Motor neuron (in vitro differentiated cells): ENCODE measurements at regions of chr22 and their contacts with region 1.

Region 1: GRCh38 chr22:42169055-42169469 is 38.5 kb upstream of the CYP2D6 start:
- ATAC-seq: peak; percentile 68 to 90 (median 78)
- H3K4me3 ChIP-seq: no peak overlapping the region
- H3K27ac ChIP-seq: no peak overlapping the region
- H3K4me1 ChIP-seq: peaks cover 39 to 49% of the 10 kb centered on the region in 2 donors

Region 2: DNA sequence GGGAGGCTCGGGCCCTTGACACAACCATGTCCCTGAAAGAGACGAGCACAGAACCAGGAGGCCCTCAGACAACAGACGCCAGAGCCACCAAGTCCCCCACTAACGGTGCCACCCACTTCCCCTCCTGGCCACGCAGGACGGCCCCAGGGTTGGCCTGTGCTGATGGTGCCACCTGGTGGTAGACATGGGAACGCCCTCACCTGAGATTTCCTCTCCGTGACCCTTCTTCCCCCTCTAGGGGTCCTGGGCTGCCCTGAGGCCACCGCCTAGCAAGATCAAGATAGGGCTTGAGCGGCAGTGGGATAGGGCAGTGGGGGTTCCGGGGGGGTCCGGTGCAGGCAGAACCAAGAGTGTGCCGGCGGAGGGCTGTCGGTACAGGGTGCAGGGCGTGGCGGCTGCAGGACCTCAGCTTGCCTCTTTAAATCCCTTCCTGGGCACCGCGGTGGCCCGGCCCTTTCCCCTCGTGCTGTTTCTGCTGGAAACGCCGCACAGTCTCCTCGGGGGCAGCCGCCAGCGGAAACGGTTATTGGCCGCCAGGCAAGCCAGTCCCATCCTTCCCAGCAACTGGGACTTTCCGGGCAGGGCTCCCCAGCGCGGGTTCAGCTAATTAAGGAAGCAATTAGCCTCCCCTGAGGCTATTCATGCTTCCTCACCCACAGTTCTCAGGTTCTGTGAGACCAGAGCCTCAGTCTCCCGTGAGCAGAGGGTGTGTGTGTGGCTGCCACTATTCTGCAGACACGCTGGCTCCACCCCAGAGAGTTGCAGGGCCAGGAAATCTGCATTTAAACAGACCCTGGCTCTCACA is 268.6 kb after region 1 on chr22:
- in situ Hi-C with region 1: loop called in 8 of 9 experiments (anchors 10 to 25 kb)
- ATAC-seq: peak; percentile 75 to 90 (median 84)
- H3K4me3 ChIP-seq: peak overlapping the region in 4 of 5 donors; percentile 20 to 32 (median 25)
- H3K27ac ChIP-seq: no peak overlapping the region
- H3K4me1 ChIP-seq: peaks cover 26 to 30% of the 10 kb centered on the region in 2 donors

Region 3: GRCh38 chr22:42444077-42444904 is 275.2 kb after region 1 on chr22:
- in situ Hi-C with region 1: loop called in 8 of 9 experiments (anchors 10 to 25 kb)
- ATAC-seq: peak; percentile 88 to 96 (median 94)
- H3K4me3 ChIP-seq: peak overlapping the region; percentile 21 to 38 (median 26)
- H3K27ac ChIP-seq: peak overlapping the region; percentile 71 to 89
- H3K4me1 ChIP-seq: peaks cover 13% of the 10 kb centered on the region in 2 donors